AG04449 (cell line): ENCODE measurements at regions of chr13 and their contacts with region 1.

Region 1: GRCh38 chr13:112917056-112917664 is 51.9 kb upstream of the MCF2L start:
- DNase-seq: no peak
- H3K4me3 ChIP-seq: no peak overlapping the region
- CTCF ChIP-seq: no peak

Region 2: GRCh38 chr13:112679932-112680705 is 237.0 kb before region 1 on chr13:
- CTCF ChIA-PET with region 1: no interaction called
- POLR2A ChIA-PET with region 1: no interaction called
- DNase-seq: no peak
- H3K4me3 ChIP-seq: no peak overlapping the region
- CTCF ChIP-seq: no peak

Region 3: DNA sequence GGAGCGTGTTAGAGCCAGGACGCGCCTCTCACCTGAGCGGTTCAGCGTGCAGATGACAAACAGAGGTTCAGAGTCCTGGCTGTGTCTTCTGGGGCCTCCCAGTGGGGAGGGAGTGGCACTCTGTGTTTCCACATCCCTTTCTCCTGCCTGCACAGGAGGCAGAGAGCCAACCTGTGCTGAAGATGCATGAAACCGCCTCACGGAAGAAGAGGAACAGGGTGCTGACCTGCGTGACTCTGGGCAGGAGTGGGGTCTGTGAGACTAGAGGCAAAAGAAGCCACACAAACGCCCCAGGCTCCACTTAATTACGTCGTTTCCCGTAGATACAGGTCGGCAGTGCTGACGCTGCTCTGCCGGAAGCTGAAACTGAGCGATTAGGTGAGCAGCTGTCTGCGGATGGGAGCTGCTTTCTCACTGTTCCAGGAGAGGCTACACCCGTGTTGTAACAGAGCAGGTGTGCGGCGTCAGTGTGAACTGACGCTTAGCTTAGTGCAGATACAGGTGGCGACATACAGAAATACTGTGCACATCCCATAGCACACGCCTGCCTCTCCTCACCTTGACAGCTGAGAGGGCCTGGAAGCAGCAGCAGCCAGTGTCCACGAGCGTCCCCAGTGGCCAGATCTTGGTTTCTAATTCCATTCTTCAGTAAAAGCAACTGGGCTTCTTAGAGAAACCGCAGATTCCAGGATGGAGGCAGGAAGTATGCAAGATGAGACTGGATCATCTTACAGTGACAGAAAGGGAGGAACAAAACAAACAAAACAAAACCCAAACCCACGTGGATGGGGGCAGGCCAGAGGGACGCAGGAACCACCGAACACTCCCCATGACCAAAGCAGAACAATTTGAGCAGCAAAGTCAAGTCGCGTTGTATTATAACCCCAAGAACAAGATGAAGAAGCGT is 14.1 kb after region 1 on chr13:
- CTCF ChIA-PET with region 1: interaction called, 12 read pairs
- POLR2A ChIA-PET with region 1: no interaction called
- DNase-seq: peak; percentile 37
- H3K4me3 ChIP-seq: no peak overlapping the region; the same call in 1 of the 2 replicates
- CTCF ChIP-seq: peak; percentile 79